ENCODE measurements at regions of chr1 and their contacts with region 1.

Region 1: GRCh38 chr1:212665241-212666115 is 34.2 kb downstream of the BATF3 start:
- DNase-seq: peak; percentile 47 to 80 (median 62)
- H3K4me3 ChIP-seq: peak overlapping the region; percentile 45
- H3K27ac ChIP-seq: no peak overlapping the region
- H3K4me1 ChIP-seq: no peaks in the 10 kb centered on the region
- H3K27me3 ChIP-seq: no peaks in the 10 kb centered on the region
- CTCF ChIP-seq: peak; percentile 42 to 70 (median 61)
- EP300 ChIP-seq: no peak
- POLR2A ChIP-seq: no peak

Region 2: GRCh38 chr1:212782422-212783154 is 117.1 kb after region 1 on chr1:
- intact Hi-C with region 1: loop called in 1 of 4 experiments (anchors 10 kb)
- DNase-seq: no peak
- H3K4me3 ChIP-seq: no peak overlapping the region
- H3K27ac ChIP-seq: no peak overlapping the region
- H3K4me1 ChIP-seq: no peaks in the 10 kb centered on the region
- H3K27me3 ChIP-seq: no peaks in the 10 kb centered on the region
- CTCF ChIP-seq: peak in 1 of 3 donors; percentile 26
- EP300 ChIP-seq: no peak
- POLR2A ChIP-seq: no peak

Measured in ovary (tissue), 10 donors.